B cell (primary cell): ENCODE measurements at regions of chr7 and their contacts with region 1.

Region 1: GRCh38 chr7:32942786-32943653 is 14.2 kb upstream of the FKBP9 start:
- DNase-seq: peak; percentile 82
- ATAC-seq: peak; percentile 81
- H3K4me3 ChIP-seq: peak overlapping the region; percentile 60 to 78 (median 70)
- H3K4me3 Mint-ChIP-seq: peak overlapping the region; percentile 99
- H3K27ac ChIP-seq: peak overlapping the region; percentile 41 to 65
- H3K27ac Mint-ChIP-seq: peak overlapping the region; percentile 73
- H3K4me1 ChIP-seq: peaks cover 17 to 21% of the 10 kb centered on the region in 2 donors
- H3K4me1 Mint-ChIP-seq: peaks cover 23% of the 10 kb centered on the region
- H3K27me3 ChIP-seq: no peaks in the 10 kb centered on the region
- H3K27me3 Mint-ChIP-seq: no peaks in the 10 kb centered on the region
- CTCF ChIP-seq: peak; percentile 70

Region 2: GRCh38 chr7:32803406-32804141 is 139.4 kb before region 1 on chr7:
- CTCF ChIA-PET with region 1: interaction called, 7 read pairs
- POLR2A ChIA-PET with region 1: no interaction called
- intact Hi-C with region 1: loop called (anchors 1 kb)
- DNase-seq: no peak
- ATAC-seq: no peak
- H3K4me3 ChIP-seq: no peak overlapping the region
- H3K4me3 Mint-ChIP-seq: no peak overlapping the region
- H3K27ac ChIP-seq: no peak overlapping the region
- H3K27ac Mint-ChIP-seq: no peak overlapping the region
- H3K4me1 ChIP-seq: no peaks in the 10 kb centered on the region
- H3K4me1 Mint-ChIP-seq: peaks cover 2% of the 10 kb centered on the region
- H3K27me3 ChIP-seq: peaks cover 0 to 3% (median 0%) of the 10 kb centered on the region in 4 experiments
- H3K27me3 Mint-ChIP-seq: no peaks in the 10 kb centered on the region
- CTCF ChIP-seq: no peak

Region 3: DNA sequence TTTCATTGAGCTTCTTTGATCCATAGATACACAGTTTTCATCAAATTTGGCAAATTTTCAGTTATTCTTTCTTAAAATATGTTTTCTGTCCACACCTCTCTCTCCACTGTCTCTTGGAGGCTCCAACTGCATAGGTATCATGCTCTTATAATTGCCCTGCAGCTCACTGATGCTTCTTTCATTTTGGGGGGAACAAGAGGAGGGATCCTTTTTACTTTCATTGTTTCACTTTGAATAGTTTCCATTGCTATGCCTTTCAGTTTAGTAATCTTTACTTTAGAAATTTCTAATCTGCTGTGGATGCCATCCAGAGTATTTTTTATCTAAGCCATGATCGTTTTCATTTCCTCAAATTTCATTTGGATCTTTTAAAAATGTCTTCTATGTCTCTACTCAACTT is 84.4 kb before region 1 on chr7:
- CTCF ChIA-PET with region 1: no interaction called
- POLR2A ChIA-PET with region 1: no interaction called
- intact Hi-C with region 1: no loop called
- DNase-seq: no peak
- ATAC-seq: no peak
- H3K4me3 ChIP-seq: no peak overlapping the region
- H3K4me3 Mint-ChIP-seq: no peak overlapping the region
- H3K27ac ChIP-seq: no peak overlapping the region
- H3K27ac Mint-ChIP-seq: no peak overlapping the region
- H3K4me1 ChIP-seq: no peaks in the 10 kb centered on the region
- H3K4me1 Mint-ChIP-seq: peaks cover under 1% of the 10 kb centered on the region
- H3K27me3 ChIP-seq: peaks cover 0 to 2% (median 1%) of the 10 kb centered on the region in 4 experiments
- H3K27me3 Mint-ChIP-seq: peaks cover 16% of the 10 kb centered on the region
- CTCF ChIP-seq: no peak

Region 4: DNA sequence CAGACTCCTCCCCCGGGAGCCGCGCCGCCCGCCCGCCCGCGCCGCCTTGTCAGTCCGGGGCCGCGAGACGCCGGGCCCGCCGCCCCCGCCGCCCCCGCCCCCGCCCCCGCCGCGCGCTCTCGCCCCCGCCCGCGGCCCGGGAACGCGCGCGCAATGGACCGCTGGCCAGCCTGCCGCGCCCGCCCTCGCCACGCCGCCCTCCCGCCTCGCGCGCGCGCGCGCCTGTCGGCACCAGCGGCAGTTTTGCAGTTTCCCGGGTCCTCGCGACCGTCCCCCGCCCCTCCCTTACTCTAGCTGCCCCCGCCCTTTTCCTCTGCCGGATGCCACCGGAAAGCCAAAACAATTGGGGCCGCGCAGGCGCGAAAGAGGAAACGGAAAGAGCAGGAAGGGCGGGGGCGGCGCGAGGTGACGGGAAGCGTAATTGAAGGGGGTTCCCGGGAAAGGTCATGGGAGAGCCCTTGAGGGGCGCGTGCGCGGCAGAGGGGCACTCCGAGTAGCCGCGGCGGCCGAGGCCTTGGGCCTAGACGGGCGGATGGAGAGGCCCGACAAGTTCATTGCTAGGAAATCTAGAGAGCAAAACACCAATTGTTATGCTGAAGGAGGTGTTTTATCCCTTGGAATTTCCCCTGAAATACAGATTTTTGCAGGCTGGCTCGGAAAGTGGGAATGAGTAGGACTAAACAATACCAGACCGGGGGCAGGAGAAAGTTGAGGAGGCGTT is 51.1 kb before region 1 on chr7:
- CTCF ChIA-PET with region 1: interaction called, 19 read pairs
- POLR2A ChIA-PET with region 1: interaction called, 10 read pairs
- intact Hi-C with region 1: loop called (anchors 1 kb)
- DNase-seq: peak; percentile 99
- ATAC-seq: peak; percentile 64
- H3K4me3 ChIP-seq: peak overlapping the region; percentile 18 to 82 (median 74)
- H3K4me3 Mint-ChIP-seq: peak overlapping the region; percentile 87
- H3K27ac ChIP-seq: peak overlapping the region; percentile 98 to 100
- H3K27ac Mint-ChIP-seq: peak overlapping the region; percentile 96
- H3K4me1 ChIP-seq: peaks cover 36 to 39% of the 10 kb centered on the region in 2 donors
- H3K4me1 Mint-ChIP-seq: peaks cover 46% of the 10 kb centered on the region
- H3K27me3 ChIP-seq: no peaks in the 10 kb centered on the region
- H3K27me3 Mint-ChIP-seq: peaks cover 2% of the 10 kb centered on the region
- CTCF ChIP-seq: no peak

Region 5: GRCh38 chr7:32957326-32958045 is 14.5 kb after region 1 on chr7 and contains the start of gene FKBP9:
- CTCF ChIA-PET with region 1: interaction called, 4 read pairs
- POLR2A ChIA-PET with region 1: no interaction called
- intact Hi-C with region 1: loop called (anchors 2 kb)
- DNase-seq: peak; percentile 50
- ATAC-seq: peak; percentile 62
- H3K4me3 ChIP-seq: peak within 1 kb of the TSS; percentile 35 to 63 (median 52)
- H3K4me3 Mint-ChIP-seq: peak within 1 kb of the TSS; percentile 84
- H3K27ac ChIP-seq: no peak within 1 kb of the TSS
- H3K27ac Mint-ChIP-seq: no peak within 1 kb of the TSS
- H3K4me1 ChIP-seq: peaks cover 7 to 11% of the 10 kb centered on the region in 2 donors
- H3K4me1 Mint-ChIP-seq: peaks cover 7% of the 10 kb centered on the region
- H3K27me3 ChIP-seq: peaks cover 0 to 27% (median 13%) of the 10 kb centered on the region in 4 experiments
- H3K27me3 Mint-ChIP-seq: peaks cover 30% of the 10 kb centered on the region
- CTCF ChIP-seq: no peak
- total RNA-seq, gene FKBP9: 0.39 and 0.52 TPM in 2 replicates

Region 6: DNA sequence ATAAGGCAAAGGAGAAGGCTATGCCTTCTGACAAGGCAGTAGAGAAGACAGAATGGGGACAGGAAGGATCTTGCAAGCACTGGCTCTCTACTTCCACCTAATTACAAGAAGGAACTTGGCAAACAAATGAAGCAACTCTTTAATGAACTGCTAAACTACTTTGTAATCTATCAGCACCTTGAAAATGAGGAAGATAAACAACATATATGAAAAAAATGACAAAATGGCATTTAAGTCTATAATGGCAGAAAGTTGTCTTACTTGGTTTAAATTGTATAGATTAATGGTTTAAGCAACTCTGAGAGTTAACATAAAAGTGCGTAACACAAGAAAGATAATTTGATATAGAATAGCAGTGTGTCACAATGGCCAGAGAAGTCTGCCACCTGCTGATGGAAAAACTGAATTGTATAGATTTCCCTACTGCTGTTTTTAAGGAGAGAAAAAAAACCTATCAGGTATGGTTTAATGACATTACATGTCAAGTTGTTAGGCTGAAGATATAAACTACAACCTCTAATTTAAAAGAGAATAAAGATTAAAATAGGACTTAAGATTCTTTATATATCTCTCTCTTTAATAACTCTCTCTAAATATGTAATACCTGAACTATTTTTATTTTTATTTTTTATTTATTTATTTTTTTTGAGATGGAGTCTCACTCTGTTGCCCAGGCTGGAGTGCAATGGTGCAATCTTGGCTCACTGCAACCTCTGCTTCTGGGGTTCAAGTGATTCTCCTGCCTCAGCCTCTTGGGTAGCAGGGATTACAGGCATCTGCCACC is 107.7 kb after region 1 on chr7:
- CTCF ChIA-PET with region 1: interaction called, 11 read pairs
- POLR2A ChIA-PET with region 1: no interaction called
- intact Hi-C with region 1: no loop called
- DNase-seq: peak; percentile 73
- ATAC-seq: peak; percentile 70
- H3K4me3 ChIP-seq: peak overlapping the region in 2 of 5 experiments; percentile 40 to 48
- H3K4me3 Mint-ChIP-seq: peak overlapping the region; percentile 29
- H3K27ac ChIP-seq: peak overlapping the region; percentile 60 to 83
- H3K27ac Mint-ChIP-seq: peak overlapping the region; percentile 28
- H3K4me1 ChIP-seq: peaks cover 39 to 47% of the 10 kb centered on the region in 2 donors
- H3K4me1 Mint-ChIP-seq: peaks cover 55% of the 10 kb centered on the region
- H3K27me3 ChIP-seq: no peaks in the 10 kb centered on the region
- H3K27me3 Mint-ChIP-seq: no peaks in the 10 kb centered on the region
- CTCF ChIP-seq: peak; percentile 76

Region 7: DNA sequence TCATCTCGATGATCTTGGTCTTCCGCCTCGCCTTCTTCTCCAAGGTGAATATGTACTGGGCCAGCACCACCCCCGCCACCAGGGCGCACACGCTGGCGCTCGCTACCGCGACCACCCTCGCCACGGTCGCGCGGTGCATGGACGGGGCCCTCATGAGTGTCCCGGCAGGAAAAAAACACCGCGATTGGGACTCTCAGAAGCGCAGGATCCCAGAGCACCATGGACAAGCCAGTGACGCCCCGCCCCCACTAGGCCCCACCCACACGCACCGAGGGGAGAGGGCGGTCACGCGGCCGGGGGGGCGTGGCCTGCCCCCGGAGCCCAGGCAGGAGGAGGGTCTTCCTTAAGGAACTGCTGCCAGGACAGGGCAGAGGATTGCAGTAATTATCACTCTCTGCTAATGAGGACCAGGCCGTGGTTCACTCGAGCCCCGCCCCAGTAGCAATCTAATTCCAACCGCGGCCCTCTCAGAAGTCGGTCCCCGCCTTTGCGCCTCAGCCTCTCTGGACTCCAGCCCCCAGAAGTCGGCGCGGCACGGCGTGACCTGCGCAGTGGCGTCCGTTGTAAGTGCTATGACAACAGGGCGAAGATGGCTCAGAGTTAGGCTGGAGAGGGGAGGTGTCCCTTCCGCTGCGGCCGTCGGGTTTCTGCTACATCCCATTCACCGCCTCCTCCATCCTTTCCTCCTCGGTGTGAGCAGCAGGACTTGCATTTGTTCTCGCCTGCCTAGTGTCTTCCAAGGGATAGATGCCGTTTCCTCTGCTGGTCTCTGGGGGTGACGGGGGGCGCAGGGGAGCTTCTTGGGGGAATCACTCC is 186.2 kb after region 1 on chr7 and contains the start of gene BBS9:
- CTCF ChIA-PET with region 1: no interaction called
- POLR2A ChIA-PET with region 1: interaction called, 3 read pairs
- intact Hi-C with region 1: loop called (anchors 1 kb)
- DNase-seq: peak; percentile 96
- ATAC-seq: peak; percentile 91
- H3K4me3 ChIP-seq: peak within 1 kb of the TSS; percentile 39 to 81 (median 62)
- H3K4me3 Mint-ChIP-seq: peak within 1 kb of the TSS; percentile 97
- H3K27ac ChIP-seq: peak within 1 kb of the TSS; percentile 22 to 79
- H3K27ac Mint-ChIP-seq: peak within 1 kb of the TSS; percentile 91
- H3K4me1 ChIP-seq: peaks cover 7 to 9% of the 10 kb centered on the region in 2 donors
- H3K4me1 Mint-ChIP-seq: peaks cover 24% of the 10 kb centered on the region
- H3K27me3 ChIP-seq: no peaks in the 10 kb centered on the region
- H3K27me3 Mint-ChIP-seq: no peaks in the 10 kb centered on the region
- CTCF ChIP-seq: peak; percentile 18
- total RNA-seq, gene BBS9: 45.2 and 48.4 TPM in 2 replicates